Activated T-helper 2 cell treated with anti-CD3 and anti-CD28 coated beads, Interferon-gamma antibody, Interleukin-2, Interleukin-4, amounts not matched to agents 10 μg/mL and 5 μg/mL and 100 μg/mL, durations not matched to agents 14 hours and 24 hours and 36 hours (primary cell): ENCODE measurements at regions of chr2 and their contacts with region 1.

Region 1: DNA sequence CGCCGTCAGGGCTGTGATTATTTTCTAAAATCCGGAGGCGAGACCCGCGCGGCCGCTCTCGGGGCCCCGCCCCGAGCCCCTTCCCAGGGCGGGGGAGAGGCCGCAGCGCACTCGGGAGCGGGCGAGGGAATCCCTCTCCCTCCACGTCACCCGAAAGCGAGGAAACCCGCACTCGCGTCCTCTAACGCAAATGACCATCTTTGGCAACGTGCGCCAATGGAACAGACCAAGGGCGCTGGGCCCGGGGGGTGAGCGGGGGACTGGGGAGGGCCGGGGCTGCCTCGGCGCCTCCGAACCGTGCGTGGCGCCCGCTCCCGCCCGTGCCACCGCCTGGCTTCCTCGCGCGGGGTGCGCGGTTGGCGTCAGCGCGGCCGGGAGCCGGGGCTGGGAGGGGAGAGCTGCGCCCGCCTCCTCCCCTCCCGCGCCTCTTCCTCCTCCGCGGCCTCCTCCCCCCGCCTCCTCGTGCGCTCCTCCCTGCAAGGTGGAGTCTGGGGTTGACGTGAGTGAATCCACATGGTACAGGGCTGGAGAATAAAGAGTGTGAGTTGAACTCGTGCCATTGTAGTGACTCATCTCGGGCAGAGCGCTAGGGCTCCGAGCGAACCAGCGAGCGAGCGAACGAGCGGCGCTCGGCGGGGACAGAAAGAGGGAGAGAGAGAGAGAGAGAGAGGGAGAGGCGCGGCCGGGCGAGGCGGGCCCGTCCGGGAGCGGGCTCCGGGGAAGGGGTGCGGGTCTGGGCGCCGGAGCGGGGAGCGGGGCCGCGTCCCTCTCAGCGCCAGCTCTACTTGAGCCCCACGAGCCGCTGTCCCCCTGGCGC is at the start of gene FOSL2:
- DNase-seq: peak; percentile 95
- H3K4me3 Mint-ChIP-seq: peak within 1 kb of the TSS; percentile 87
- H3K27ac Mint-ChIP-seq: peak within 1 kb of the TSS; percentile 97
- H3K4me1 Mint-ChIP-seq: peaks cover 33% of the 10 kb centered on the region
- H3K27me3 Mint-ChIP-seq: no peaks in the 10 kb centered on the region
- total RNA-seq, gene FOSL2: 146 and 156 TPM in 2 replicates

Region 2: GRCh38 chr2:27703638-27704341 is 688.7 kb before region 1 on chr2:
- intact Hi-C with region 1: loop called (anchors 5 kb)
- DNase-seq: peak; percentile 77
- H3K4me3 Mint-ChIP-seq: no peak overlapping the region
- H3K27ac Mint-ChIP-seq: no peak overlapping the region
- H3K4me1 Mint-ChIP-seq: peaks cover 25% of the 10 kb centered on the region
- H3K27me3 Mint-ChIP-seq: no peaks in the 10 kb centered on the region

Region 3: GRCh38 chr2:27771548-27772335 is 620.8 kb before region 1 on chr2 and contains the start of gene MRPL33:
- intact Hi-C with region 1: loop called (anchors 5 kb)
- DNase-seq: peak; percentile 85
- H3K4me3 Mint-ChIP-seq: peak within 1 kb of the TSS; percentile 95
- H3K27ac Mint-ChIP-seq: peak within 1 kb of the TSS; percentile 92
- H3K4me1 Mint-ChIP-seq: peaks cover 28% of the 10 kb centered on the region
- H3K27me3 Mint-ChIP-seq: no peaks in the 10 kb centered on the region
- total RNA-seq, gene MRPL33: 57.7 and 58.9 TPM in 2 replicates

Region 4: DNA sequence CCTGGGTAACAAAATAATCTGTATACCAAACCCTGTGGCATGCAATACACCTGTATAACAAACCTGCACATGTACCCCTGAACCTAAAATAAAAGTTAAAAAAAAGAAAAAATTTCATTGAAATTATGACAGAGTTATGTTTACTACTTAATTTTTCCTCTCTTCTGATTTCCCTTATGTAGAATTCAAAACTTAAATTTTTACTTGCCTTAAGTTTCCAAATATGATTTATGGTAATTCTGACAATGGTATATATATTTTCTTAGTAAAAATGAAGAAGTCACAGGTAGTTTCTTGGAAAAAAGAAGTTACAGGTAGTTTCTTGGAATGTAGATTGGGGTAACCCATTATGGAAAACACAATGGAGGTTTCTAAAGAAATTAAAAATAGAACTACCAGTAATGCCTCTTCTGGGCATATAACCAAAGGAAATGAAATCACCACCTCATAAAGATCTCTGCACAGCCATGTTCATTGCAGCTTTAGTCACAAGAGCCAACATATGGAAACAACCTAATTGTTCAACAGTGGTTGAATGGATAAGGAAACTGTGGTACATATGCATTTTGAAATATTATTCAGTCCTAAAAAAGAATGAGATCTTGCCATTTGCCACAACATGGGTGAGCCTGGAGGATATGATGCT is 337.1 kb before region 1 on chr2:
- intact Hi-C with region 1: loop called (anchors 10 kb)
- DNase-seq: no peak
- H3K4me3 Mint-ChIP-seq: no peak overlapping the region
- H3K27ac Mint-ChIP-seq: peak overlapping the region; percentile 36
- H3K4me1 Mint-ChIP-seq: peaks cover 16% of the 10 kb centered on the region
- H3K27me3 Mint-ChIP-seq: no peaks in the 10 kb centered on the region

Region 5: GRCh38 chr2:28366496-28367282 is 25.8 kb before region 1 on chr2:
- intact Hi-C with region 1: loop called (anchors 2 kb)
- DNase-seq: peak; percentile 75
- H3K4me3 Mint-ChIP-seq: peak overlapping the region; percentile 69
- H3K27ac Mint-ChIP-seq: peak overlapping the region; percentile 96
- H3K4me1 Mint-ChIP-seq: peaks cover 64% of the 10 kb centered on the region
- H3K27me3 Mint-ChIP-seq: peaks cover 6% of the 10 kb centered on the region

Region 6: DNA sequence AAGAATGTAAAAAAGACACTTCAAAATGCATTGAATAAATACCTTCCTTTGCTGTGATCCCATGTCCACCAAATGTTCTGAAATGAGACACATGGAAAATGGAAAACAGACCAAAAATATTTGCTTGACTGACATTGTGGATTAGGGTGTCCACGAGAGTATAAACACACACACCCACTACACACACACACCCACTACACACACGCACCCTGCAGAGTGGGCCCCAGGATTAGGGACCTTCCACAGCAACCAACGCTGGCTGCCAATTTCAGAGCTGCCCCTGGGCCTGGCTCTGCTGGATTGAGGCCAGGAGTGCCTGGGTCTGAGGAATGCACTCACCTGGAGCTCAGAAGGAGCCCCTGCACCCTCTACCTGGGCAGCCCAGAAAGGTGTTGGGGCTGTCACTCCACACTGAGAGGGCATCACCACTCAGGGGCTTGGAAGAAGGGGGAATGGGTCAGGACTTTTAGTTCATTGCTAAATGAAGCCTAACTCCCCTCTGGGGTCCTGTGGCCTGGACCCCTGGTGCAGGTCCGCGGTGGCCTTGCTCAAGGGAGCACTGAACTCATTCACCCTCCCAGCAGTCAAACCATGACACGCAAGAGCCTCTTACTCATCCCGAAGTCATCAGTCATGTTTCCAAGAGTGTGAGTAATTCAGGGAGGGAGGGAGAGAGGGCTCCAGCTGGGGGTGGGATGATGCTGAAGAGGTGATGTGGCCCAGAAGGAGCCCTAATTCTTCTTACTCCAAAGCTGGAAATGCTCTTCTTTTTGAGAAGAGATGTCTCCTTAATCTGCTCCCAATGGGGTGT is 53.1 kb after region 1 on chr2:
- intact Hi-C with region 1: loop called (anchors 1 kb)
- DNase-seq: no peak
- H3K4me3 Mint-ChIP-seq: peak overlapping the region; percentile 17
- H3K27ac Mint-ChIP-seq: peak overlapping the region; percentile 74
- H3K4me1 Mint-ChIP-seq: peaks cover 67% of the 10 kb centered on the region
- H3K27me3 Mint-ChIP-seq: no peaks in the 10 kb centered on the region

Region 7: GRCh38 chr2:28621172-28622100 is 228.9 kb after region 1 on chr2:
- intact Hi-C with region 1: loop called (anchors 5 kb)
- DNase-seq: peak; percentile 74
- H3K4me3 Mint-ChIP-seq: peak overlapping the region; percentile 52
- H3K27ac Mint-ChIP-seq: peak overlapping the region; percentile 96
- H3K4me1 Mint-ChIP-seq: peaks cover 89% of the 10 kb centered on the region
- H3K27me3 Mint-ChIP-seq: no peaks in the 10 kb centered on the region